ENCODE measurements at regions of chr1 and their contacts with region 1.

Region 1: DNA sequence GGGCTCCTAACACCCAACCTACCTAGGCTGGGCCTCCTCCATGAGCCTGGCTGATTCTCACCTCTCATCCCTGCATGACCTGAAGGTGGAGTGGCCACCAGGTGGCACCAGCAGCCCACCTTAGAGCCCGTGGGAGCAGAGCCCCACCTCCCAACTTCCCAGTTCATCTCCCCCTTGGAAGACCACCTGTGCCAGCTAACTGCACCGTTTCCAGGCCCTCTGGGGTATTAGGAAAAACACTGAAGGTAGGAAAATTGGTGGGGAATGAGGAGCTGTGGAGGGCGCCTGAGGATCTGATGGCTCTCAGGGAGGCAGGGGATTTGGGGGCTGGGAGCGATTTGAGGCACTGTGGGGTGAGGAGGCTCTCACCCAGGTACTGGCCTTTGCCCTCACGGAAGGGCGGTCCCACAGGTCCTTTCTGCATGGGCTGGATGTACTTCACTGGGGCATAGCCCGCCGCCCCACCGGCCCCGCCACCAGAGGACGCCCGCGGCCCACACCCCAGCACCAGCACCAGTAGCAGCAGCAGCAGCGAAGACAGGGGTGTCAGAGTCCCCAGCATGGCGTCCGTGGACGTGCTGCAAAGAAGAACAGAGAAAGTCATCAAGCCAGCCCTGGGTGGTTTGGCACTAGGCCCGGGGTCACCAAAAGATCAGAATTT is 11.1 kb downstream of the ADPRS start:
- DNase-seq: peak; percentile 84
- H3K4me3 ChIP-seq: no peak overlapping the region
- H3K27ac ChIP-seq: no peak overlapping the region
- H3K4me1 ChIP-seq: peaks cover 0 to 8% (median 3%) of the 10 kb centered on the region in 4 donors
- H3K27me3 ChIP-seq: no peaks in the 10 kb centered on the region
- CTCF ChIP-seq: peak; percentile 77 to 93 (median 86)
- EP300 ChIP-seq: no peak
- POLR2A ChIP-seq: no peak

Region 2: DNA sequence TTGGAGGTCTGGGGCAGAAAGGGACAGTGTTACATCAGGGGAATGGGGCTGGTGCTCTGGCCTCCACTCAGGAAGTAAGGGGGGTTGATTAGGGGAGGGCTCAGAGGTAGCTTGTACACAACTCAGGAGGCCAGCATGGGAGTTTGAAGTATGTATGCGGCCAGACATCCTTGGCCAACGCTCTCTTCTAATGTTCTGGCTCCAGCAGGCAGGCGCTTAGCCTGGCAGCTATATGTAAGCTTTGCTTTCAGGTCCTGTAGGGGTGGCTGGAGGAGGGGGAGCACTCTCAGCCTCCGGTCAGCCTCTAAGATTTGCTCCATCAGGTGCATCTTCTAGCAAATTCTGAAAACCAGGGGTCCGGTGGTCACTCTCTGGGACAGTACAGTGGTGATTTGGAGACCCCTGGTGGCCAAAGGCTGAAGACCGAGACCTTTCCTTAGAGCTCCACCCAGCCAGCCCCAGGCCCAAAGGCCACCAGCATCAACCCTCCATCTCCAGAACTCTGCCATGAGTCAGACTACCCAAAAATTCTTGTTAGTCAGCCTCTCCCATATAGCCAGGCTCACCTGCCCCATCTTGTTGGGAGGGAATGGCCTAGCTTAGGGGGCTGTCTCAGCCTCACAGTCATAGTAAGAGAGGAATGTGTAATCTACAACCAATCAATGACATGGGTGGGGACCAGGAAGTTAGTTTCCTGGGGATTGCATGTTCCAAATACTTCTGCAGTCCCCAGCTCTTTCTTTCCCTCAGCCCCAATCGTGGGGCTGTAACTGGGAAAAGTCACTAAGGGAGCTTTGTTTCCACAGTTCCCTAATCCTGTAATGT is 34.9 kb after region 1 on chr1:
- in situ Hi-C with region 1: no loop called
- intact Hi-C with region 1: loop called (anchors 2 kb)
- DNase-seq: peak; percentile 45
- H3K4me3 ChIP-seq: no peak overlapping the region
- H3K27ac ChIP-seq: peak overlapping the region; percentile 48 to 70 (median 62)
- H3K4me1 ChIP-seq: peaks cover 0 to 35% (median 16%) of the 10 kb centered on the region in 4 donors
- H3K27me3 ChIP-seq: no peaks in the 10 kb centered on the region
- CTCF ChIP-seq: peak; percentile 61 to 73 (median 70)
- EP300 ChIP-seq: no peak
- POLR2A ChIP-seq: no peak

Region 3: DNA sequence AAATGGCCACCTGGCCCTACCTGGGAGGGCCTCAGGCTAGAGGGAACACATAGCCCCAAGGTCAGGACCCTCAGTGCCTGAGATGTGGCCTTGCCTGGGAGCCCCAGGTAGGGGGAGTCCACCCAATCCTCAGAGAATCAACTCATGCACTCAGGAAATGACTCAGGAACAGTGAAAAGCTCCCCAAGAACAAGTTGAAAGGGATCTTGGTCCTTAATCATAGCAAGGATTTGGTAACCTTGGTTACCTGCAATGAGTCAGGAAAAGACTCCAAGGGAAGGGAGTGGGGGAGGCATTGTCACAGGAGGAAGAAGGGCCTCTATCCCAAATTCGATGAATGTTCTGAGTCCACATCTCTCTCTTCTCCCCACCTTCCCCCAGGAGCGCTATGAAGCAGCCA is 73.2 kb after region 1 on chr1:
- in situ Hi-C with region 1: no loop called
- intact Hi-C with region 1: no loop called
- DNase-seq: no peak
- H3K4me3 ChIP-seq: no peak overlapping the region
- H3K27ac ChIP-seq: peak overlapping the region in 1 of 4 donors; percentile 3
- H3K4me1 ChIP-seq: peaks cover 3 to 25% (median 19%) of the 10 kb centered on the region in 4 donors
- H3K27me3 ChIP-seq: no peaks in the 10 kb centered on the region
- CTCF ChIP-seq: no peak
- EP300 ChIP-seq: no peak
- POLR2A ChIP-seq: no peak

Region 4: DNA sequence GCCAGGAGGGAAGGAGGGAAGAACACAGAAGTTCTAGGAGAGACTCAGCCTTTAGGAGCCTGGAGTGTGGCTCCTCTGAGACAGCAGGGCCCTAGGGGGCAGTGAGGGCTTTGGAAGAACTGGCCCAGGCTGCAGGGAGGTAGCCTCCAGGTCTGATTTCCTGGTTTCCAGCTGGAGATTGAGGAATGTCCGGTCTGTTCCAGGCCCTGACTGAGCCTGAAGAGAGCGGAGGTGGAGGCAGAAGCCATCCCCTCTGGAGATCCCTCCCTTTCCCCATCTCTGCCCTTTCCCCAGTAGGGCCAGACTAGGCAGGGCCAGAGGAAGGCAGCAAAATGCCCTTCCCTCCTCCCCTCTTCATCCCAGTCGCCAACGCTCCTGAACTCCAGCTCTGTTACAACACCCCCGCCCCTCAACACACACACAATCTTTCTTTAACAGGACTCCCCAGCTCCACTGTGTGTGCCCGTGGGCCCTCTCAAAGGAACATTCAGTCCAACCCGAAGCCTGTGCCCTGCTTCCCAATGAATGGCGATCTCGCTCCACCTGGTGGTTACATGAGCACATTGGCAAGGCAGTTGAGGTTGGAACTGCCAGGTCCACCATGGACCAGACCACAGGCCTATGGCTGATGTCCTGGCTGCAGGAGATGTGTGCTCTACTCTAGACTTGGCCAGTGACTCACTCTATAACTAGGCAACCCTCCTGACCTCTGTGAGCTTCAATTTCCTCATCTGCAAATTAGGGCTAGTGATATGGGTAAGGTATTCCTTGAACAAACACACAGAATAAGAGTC is 88.2 kb after region 1 on chr1:
- in situ Hi-C with region 1: loop called in 3 of 4 experiments (anchors 10 kb)
- intact Hi-C with region 1: no loop called
- DNase-seq: peak; percentile 88
- H3K4me3 ChIP-seq: no peak overlapping the region
- H3K27ac ChIP-seq: peak overlapping the region; percentile 77 to 87 (median 82)
- H3K4me1 ChIP-seq: peaks cover 0 to 14% (median 5%) of the 10 kb centered on the region in 4 donors
- H3K27me3 ChIP-seq: no peaks in the 10 kb centered on the region
- CTCF ChIP-seq: peak; percentile 84 to 97 (median 87)
- EP300 ChIP-seq: no peak
- POLR2A ChIP-seq: no peak

Region 5: GRCh38 chr1:36199934-36200741 is 100.3 kb after region 1 on chr1:
- in situ Hi-C with region 1: loop called in 1 of 4 experiments (anchors 10 kb)
- intact Hi-C with region 1: no loop called
- DNase-seq: peak; percentile 20
- H3K4me3 ChIP-seq: no peak overlapping the region
- H3K27ac ChIP-seq: peak overlapping the region in 1 of 4 donors; percentile 16
- H3K4me1 ChIP-seq: peaks cover 2 to 22% (median 7%) of the 10 kb centered on the region in 4 donors
- H3K27me3 ChIP-seq: no peaks in the 10 kb centered on the region
- CTCF ChIP-seq: no peak
- EP300 ChIP-seq: no peak
- POLR2A ChIP-seq: no peak

Region 6: DNA sequence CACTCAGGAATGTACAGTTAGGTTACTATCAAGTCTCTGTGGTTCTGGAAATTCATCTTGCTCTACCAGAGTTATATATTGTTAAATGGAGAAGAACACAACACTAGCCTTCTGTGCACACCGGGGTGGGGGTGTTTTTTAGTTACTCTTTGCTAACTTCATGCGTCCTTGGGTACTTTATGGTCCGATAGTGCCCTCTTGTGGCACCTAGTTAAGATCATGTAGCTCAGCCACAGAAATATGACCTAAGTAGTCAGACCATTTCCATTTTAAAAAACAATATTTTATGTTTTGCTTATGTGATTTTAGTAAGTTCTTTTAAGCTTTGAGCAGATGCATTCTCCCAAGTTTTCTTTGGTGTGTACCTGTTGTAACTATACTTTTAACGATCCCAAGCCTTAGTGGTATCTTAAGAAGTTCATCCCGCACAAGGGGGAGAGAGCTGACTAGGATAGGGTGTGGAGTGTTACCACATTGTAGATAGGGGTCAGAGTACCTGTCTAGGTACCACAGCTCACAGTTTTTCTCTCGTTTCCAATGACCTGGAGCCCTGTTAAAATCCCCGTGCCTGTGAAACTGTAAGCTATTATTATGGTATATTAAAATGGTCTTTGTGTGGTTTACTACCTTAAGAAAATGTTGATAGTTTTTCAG is 185.8 kb after region 1 on chr1:
- in situ Hi-C with region 1: loop called in 2 of 4 experiments (anchors 10 to 25 kb)
- intact Hi-C with region 1: no loop called
- DNase-seq: peak; percentile 61
- H3K4me3 ChIP-seq: no peak overlapping the region
- H3K27ac ChIP-seq: peak overlapping the region; percentile 5 to 51 (median 30)
- H3K4me1 ChIP-seq: peaks cover 0 to 28% (median under 1%) of the 10 kb centered on the region in 4 donors
- H3K27me3 ChIP-seq: no peaks in the 10 kb centered on the region
- CTCF ChIP-seq: peak; percentile 65 to 72 (median 68)
- EP300 ChIP-seq: no peak
- POLR2A ChIP-seq: no peak

Region 7: DNA sequence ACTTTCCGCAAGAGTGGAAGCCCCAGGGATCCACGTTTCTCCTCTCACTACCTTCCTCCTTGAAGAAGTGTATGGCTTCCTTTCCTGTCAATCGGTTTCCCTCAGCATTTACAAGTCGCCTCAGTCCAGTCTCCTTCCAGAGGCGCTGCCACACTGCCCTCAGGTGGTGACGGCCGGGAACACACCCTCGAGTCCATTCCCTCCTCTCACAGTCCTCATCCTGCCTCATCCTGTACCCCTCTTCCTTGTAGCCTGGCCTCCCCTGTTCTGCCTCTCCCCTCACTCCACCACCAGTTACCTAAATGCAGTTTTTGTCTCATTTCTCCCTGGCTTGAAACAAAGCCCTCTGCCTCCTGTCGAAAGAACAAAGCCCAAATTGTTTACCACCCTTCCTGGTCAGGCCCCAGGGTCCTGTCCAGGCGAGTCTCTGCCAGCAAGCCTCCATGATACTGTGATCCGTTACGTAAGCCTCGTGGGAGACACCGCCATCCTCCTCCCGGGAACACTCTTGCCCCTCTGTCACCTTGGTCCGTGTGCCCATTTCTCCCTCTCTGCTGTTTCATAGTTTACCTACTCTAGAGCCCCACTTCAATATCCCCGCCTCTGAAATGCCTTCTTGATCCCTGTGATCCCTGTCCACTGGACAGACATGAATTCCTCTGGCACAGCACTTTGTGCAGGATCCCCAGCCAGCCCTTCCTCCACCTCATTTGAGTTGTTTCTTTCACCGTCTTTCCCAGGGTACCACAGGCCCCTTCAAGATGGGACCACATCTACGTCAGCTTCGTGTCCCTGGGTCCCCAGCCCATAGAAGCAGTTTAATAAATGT is 321.2 kb after region 1 on chr1:
- in situ Hi-C with region 1: loop called in 1 of 4 experiments (anchors 25 kb)
- intact Hi-C with region 1: loop called (anchors 5 kb)
- DNase-seq: peak; percentile 93
- H3K4me3 ChIP-seq: no peak overlapping the region
- H3K27ac ChIP-seq: peak overlapping the region in 3 of 4 donors; percentile 10 to 50 (median 15)
- H3K4me1 ChIP-seq: peaks cover 0 to 9% (median 3%) of the 10 kb centered on the region in 4 donors
- H3K27me3 ChIP-seq: no peaks in the 10 kb centered on the region
- CTCF ChIP-seq: peak; percentile 91 to 95 (median 92)
- EP300 ChIP-seq: no peak
- POLR2A ChIP-seq: no peak

Measured in transverse colon (tissue), 4 donors.